ENCODE measurements at regions of chr12 and their contacts with region 1.

Region 1: DNA sequence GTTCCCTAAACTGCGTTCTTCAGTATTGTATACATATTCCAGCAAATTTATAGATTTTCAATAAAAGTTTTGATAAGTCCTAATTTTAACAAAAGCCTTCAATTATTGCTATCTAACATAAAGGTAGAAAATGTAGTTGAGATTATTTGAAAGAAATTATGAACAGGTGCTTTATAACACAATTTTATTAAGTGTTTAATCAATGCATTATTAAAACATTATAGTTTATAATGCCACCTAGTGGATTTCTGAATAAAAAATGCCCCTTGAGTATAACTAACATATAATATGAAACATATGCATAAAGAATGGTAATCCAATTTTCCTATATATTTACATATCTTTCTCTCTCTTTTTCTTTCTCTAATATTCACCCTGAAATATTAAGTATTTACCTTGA is 515.3 kb downstream of the SLC6A15 start:
- DNase-seq: no peak
- H3K4me3 ChIP-seq: no peak overlapping the region
- H3K27ac ChIP-seq: no peak overlapping the region
- H3K4me1 ChIP-seq: no peaks in the 10 kb centered on the region
- H3K27me3 ChIP-seq: no peaks in the 10 kb centered on the region
- CTCF ChIP-seq: peak in 2 of 4 experiments; percentile 16 to 47
- EP300 ChIP-seq: no peak
- POLR2A ChIP-seq: no peak

Region 2: GRCh38 chr12:82527165-82527780 is 1870.0 kb before region 1 on chr12:
- intact Hi-C with region 1: loop called (anchors 5 kb)
- DNase-seq: no peak
- H3K4me3 ChIP-seq: no peak overlapping the region
- H3K27ac ChIP-seq: no peak overlapping the region
- H3K4me1 ChIP-seq: no peaks in the 10 kb centered on the region
- H3K27me3 ChIP-seq: no peaks in the 10 kb centered on the region
- CTCF ChIP-seq: peak; percentile 48 to 78 (median 74)
- EP300 ChIP-seq: no peak
- POLR2A ChIP-seq: no peak

Region 3: GRCh38 chr12:84191779-84192178 is 205.5 kb before region 1 on chr12:
- intact Hi-C with region 1: no loop called
- DNase-seq: no peak
- H3K4me3 ChIP-seq: no peak overlapping the region
- H3K27ac ChIP-seq: no peak overlapping the region
- H3K4me1 ChIP-seq: no peaks in the 10 kb centered on the region
- H3K27me3 ChIP-seq: no peaks in the 10 kb centered on the region
- CTCF ChIP-seq: no peak
- EP300 ChIP-seq: no peak
- POLR2A ChIP-seq: no peak

Region 4: GRCh38 chr12:84585776-84586395 is 188.6 kb after region 1 on chr12:
- intact Hi-C with region 1: no loop called
- DNase-seq: no peak
- H3K4me3 ChIP-seq: no peak overlapping the region
- H3K27ac ChIP-seq: no peak overlapping the region
- H3K4me1 ChIP-seq: no peaks in the 10 kb centered on the region
- H3K27me3 ChIP-seq: no peaks in the 10 kb centered on the region
- CTCF ChIP-seq: no peak
- EP300 ChIP-seq: no peak
- POLR2A ChIP-seq: no peak

Region 5: GRCh38 chr12:84637926-84638325 is 240.7 kb after region 1 on chr12:
- intact Hi-C with region 1: no loop called
- DNase-seq: no peak
- H3K4me3 ChIP-seq: no peak overlapping the region
- H3K27ac ChIP-seq: peak overlapping the region in 1 of 4 donors; percentile 9
- H3K4me1 ChIP-seq: peaks cover 0 to 3% (median 0%) of the 10 kb centered on the region in 4 donors
- H3K27me3 ChIP-seq: no peaks in the 10 kb centered on the region
- CTCF ChIP-seq: no peak
- EP300 ChIP-seq: no peak
- POLR2A ChIP-seq: no peak